Mucosa of descending colon (tissue), 3 donors: ENCODE measurements at regions of chr2 and their contacts with region 1.

Region 1: DNA sequence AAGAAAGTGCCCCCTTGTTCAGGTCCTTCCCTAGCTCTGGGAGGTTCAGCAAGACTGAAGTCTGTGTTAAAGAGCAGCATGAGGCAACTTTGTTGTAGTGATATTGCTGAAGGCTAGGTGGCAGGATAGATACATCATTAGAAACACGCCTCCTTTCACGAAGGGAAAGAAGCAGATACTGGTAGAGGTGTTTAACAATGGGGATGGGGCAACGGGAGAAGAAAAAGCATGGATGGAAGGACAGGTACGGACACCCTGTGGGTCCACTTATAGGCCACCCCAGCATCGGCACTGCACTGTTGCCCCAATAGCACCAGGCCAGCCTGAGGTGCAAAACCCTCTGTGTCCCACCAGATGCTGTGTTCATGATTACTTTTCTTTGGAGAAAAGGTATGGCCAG is 3.5 kb upstream of the IGFBP5 start:
- DNase-seq: no peak
- ATAC-seq: peak; percentile 55
- H3K4me3 ChIP-seq: no peak overlapping the region
- H3K4me1 ChIP-seq: peaks cover 9% of the 10 kb centered on the region
- CTCF ChIP-seq: no peak

Region 2: DNA sequence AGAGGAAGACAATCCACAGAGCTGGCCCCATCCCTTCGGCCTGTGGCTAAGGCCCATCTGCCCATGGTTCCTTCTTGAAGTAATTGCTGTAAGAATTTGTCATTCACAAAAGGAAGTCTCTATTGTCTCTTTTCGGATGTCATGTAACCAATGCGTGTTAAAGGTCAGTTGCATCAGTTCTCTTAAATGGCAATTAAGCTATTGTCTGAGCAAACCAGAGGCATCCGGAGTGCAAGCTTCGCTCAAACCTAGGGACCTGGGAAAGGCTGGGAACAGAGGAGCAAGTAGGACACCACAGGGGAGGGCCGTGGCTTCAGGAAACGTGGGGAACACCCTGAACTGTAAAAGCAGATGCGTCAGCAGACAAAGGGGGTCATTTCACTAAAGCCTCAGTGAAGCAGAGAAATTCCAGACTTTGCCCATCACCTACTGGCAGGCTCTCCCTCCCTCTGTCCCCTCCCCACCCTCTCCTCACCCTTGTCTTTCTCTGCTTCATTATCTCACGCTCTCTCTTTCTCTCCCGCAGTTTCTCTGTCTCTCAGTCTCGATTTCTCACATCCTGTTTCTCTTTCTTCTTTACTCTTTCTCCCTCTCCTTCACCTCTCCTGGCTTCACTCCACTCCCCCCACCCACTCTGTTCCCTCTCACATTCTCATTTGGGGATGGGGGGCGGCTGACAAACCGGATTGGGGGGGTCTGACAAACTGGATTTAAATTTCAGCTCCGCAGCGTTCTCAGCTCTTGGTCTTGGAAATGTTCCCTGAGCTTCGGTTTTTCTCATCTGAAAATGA is 365.5 kb after region 1 on chr2:
- intact Hi-C with region 1: loop called in 1 of 2 experiments (anchors 10 kb)
- DNase-seq: no peak
- ATAC-seq: no peak
- H3K4me3 ChIP-seq: no peak overlapping the region
- H3K4me1 ChIP-seq: no peaks in the 10 kb centered on the region
- CTCF ChIP-seq: no peak

Region 3: GRCh38 chr2:217166241-217166850 is 467.5 kb after region 1 on chr2:
- intact Hi-C with region 1: loop called in 1 of 2 experiments (anchors 10 kb)
- DNase-seq: no peak
- ATAC-seq: no peak
- H3K4me3 ChIP-seq: no peak overlapping the region
- H3K4me1 ChIP-seq: no peaks in the 10 kb centered on the region
- CTCF ChIP-seq: no peak

Region 4: DNA sequence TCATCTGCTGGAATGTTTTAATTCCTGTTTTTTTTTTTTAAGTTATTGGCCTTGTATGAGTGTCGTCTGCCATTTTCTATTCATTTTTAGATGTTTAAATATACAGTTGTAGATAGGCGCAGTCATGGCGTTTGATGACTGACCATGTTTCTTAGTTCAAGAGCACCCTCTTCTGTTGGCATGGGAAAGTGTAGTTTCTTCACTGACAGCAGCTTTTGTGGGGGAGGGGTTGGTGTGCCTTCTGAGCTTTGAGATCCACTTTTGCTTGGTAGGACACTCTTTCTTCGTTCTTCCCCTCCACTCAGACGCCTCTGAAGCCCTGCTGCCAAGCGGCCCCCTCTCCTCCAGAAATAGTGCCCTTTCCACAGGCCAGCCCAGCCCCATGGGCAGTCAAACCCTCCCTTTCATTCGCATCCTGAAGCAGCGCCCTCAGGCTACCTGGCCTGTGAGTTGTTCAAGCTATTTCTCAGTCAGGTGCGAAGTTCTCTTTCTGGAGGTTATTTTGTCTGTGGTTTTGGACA is 811.9 kb after region 1 on chr2:
- intact Hi-C with region 1: loop called in 1 of 2 experiments (anchors 5 kb)
- DNase-seq: peak in 1 of 3 donors; percentile 68
- ATAC-seq: peak; percentile 59
- H3K4me3 ChIP-seq: no peak overlapping the region
- H3K4me1 ChIP-seq: no peaks in the 10 kb centered on the region
- CTCF ChIP-seq: no peak